Psoas muscle (tissue), 8 donors: ENCODE measurements at regions of chr12 and their contacts with region 1.

Region 1: DNA sequence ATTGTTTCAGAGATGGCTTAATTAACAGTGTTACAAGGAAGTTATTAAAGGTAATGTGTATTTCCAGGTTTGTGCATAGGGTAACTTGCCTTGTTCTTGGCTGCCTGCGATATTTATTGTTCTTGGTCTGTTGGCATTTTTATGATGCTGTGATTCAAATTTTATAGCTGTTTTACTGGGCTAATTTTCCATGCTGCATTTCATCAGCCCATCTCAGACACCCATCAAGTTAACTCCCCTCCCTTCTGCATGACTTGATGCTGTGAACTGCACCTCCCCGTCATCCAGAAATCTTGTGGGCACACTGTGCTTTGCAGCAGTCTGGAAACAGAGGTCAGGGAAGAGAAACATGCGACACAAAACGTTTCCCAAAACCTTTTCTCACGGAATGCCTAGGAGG is 1049.2 kb downstream of the AACS start:
- DNase-seq: no peak
- ATAC-seq: no peak
- H3K4me3 ChIP-seq: no peak overlapping the region
- H3K27ac ChIP-seq: no peak overlapping the region
- H3K4me1 ChIP-seq: no peaks in the 10 kb centered on the region
- H3K27me3 ChIP-seq: no peaks in the 10 kb centered on the region
- CTCF ChIP-seq: no peak

Region 2: DNA sequence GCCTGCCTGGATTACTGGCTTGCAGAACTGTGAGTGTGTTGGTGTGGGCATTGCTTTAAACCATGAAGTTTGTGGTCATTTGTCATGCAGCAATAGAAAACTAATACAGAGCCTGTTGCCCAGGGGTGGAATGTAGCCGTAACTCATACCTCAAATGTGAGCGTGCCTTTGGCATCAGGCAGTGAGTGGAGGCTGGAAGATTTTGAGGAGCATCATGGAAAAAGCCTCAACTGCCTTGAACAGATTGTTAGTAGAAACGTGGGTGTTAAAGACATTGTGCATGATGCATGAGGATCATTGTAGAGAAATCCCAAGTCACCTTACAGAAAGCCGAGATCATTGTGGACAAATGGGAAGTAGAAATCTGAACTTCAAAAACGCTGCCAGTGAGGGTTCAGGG is 468.7 kb before region 1 on chr12:
- intact Hi-C with region 1: loop called in 1 of 2 experiments (anchors 5 kb)
- DNase-seq: no peak
- ATAC-seq: no peak
- H3K4me3 ChIP-seq: no peak overlapping the region
- H3K27ac ChIP-seq: no peak overlapping the region
- H3K4me1 ChIP-seq: no peaks in the 10 kb centered on the region
- H3K27me3 ChIP-seq: no peaks in the 10 kb centered on the region
- CTCF ChIP-seq: no peak